PC-9 (cell line): ENCODE measurements at regions of chr12 and their contacts with region 1.

Region 1: DNA sequence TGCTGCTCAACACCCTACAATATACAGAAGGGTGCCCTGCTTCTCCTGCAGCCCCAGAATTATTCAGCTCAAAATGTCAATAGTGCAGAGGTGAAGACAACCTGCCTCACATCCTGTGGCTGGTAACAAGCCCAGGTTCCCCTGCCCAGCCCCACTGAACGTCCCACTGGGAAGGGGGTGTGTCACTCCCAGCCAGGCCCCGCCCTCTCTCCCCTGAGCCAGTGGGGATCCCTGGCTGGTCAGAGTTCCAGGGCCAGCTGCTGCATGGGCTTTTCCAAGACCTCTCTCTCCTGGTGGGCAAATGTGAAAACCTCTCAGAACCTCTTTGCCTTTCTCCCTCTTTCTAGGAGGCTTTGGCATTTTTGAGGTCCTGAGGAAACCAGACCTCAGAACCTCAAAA is 13.7 kb upstream of the LHX5 start:
- DNase-seq: no peak
- H3K4me3 ChIP-seq: no peak overlapping the region
- H3K27ac ChIP-seq: no peak overlapping the region
- H3K4me1 ChIP-seq: no peaks in the 10 kb centered on the region
- H3K27me3 ChIP-seq: peaks cover 78% of the 10 kb centered on the region
- CTCF ChIP-seq: no peak

Region 2: GRCh38 chr12:113524495-113524894 is 39.2 kb after region 1 on chr12:
- CTCF ChIA-PET with region 1: no interaction called
- POLR2A ChIA-PET with region 1: interaction called, 16 read pairs
- intact Hi-C with region 1: no loop called
- DNase-seq: no peak
- H3K4me3 ChIP-seq: no peak overlapping the region
- H3K27ac ChIP-seq: no peak overlapping the region
- H3K4me1 ChIP-seq: no peaks in the 10 kb centered on the region
- H3K27me3 ChIP-seq: peaks cover 60% of the 10 kb centered on the region
- CTCF ChIP-seq: no peak